ENCODE measurements at regions of chr20 and their contacts with region 1.

Region 1: DNA sequence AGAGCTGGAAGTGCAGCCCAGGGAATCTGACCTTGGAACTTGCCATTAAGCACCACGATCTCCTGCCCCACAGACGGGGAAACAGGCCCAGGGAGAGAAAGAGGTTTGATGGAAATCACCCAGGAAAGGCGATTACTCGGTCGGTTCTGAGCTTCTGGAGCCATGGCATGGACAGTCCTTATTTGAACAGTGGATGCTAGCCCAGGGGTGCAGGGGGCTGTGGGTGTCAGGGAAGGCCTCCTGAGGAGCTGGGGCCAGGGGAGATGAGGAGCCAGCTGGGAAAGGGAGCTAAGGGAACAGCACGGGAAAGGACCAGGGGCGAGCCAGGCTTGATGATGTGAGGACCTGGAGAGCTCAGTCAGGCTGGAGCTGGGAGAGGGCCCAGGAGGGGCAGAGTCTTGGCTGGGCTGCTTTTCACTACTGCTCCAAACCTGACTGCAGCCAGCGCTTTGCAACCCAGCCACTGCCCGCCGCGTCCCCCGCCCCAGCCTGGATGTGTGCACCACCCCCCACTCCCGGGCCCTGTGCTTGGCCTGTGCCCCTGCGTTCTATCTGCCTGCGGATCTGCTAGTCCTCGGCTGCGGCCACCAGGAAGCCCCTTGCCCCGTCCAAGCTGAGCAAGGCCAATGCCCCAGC is 17.8 kb downstream of the SUN5 start:
- DNase-seq: no peak
- ATAC-seq: no peak
- H3K4me3 Mint-ChIP-seq: no peak overlapping the region
- H3K27ac Mint-ChIP-seq: peak overlapping the region in 5 of 10 donors; percentile 42 to 81 (median 53)
- H3K4me1 Mint-ChIP-seq: peaks cover 10 to 46% (median 28%) of the 10 kb centered on the region in 4 donors
- H3K27me3 Mint-ChIP-seq: no peaks in the 10 kb centered on the region

Region 2: GRCh38 chr20:32972181-32973076 is 14.0 kb before region 1 on chr20:
- POLR2A ChIA-PET with region 1: interaction called, 15 read pairs
- DNase-seq: peak; percentile 62 to 96 (median 91)
- ATAC-seq: peak; percentile 83 to 86
- H3K4me3 Mint-ChIP-seq: no peak overlapping the region
- H3K27ac Mint-ChIP-seq: no peak overlapping the region
- H3K4me1 Mint-ChIP-seq: peaks cover 10 to 49% (median 26%) of the 10 kb centered on the region in 4 donors
- H3K27me3 Mint-ChIP-seq: no peaks in the 10 kb centered on the region

Measured in naive thymus-derived CD8-positive, alpha-beta T cell (primary cell).